MCF 10A (cell line): ENCODE measurements at regions of chr1 and their contacts with region 1.

Region 1: DNA sequence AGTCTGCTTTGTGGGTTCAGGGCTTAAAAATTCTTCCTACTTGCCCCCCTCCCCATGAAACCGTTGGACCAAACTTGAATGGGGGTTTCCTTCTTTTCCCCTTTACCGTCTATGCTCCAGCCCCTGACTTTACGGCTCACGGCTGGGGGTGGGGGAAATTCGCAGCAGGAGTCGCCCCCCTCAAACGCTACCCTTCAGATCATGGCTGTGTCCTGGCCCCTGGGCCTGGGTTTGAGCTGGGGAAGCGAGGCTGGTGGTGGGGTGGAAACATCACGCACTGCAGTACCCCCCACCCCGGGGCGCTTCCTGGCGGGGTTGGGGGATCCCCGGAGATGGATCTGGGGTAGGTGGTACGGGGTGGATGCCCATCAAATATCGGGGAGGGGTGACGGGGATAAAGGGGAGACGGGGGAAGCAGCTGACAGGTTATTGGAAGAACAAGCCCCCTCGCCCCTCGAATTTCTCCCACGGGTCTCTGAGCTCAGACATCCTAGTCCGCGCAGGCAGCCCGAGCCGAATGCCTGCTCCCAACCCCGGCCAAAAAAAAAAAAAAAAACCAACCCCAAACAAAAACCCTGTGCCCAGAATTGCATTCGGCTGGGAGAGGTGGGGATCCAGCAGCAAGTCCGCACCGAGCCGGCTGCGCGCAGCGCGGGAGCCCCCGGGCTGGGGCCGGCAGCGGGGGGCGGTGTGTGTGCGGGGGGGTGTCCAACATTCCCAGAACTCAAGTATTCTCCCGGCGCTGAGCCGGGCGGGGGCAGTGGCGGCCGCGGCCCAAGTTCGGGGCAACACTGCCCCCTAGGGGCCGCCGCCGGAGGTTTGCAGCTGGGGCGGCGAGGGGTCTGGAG is 59.0 kb upstream of the ACOT11 start:
- DNase-seq: peak; percentile 74
- H3K4me3 Mint-ChIP-seq: peak overlapping the region; percentile 77
- H3K27ac Mint-ChIP-seq: peak overlapping the region; percentile 93
- H3K4me1 Mint-ChIP-seq: peaks cover 5% of the 10 kb centered on the region
- H3K27me3 Mint-ChIP-seq: no peaks in the 10 kb centered on the region
- CTCF ChIP-seq: peak; percentile 86

Region 2: GRCh38 chr1:53929246-53929960 is 559.6 kb before region 1 on chr1:
- CTCF ChIA-PET with region 1: no interaction called
- POLR2A ChIA-PET with region 1: no interaction called
- intact Hi-C with region 1: no loop called
- DNase-seq: no peak
- H3K4me3 Mint-ChIP-seq: no peak overlapping the region
- H3K27ac Mint-ChIP-seq: no peak overlapping the region
- H3K4me1 Mint-ChIP-seq: no peaks in the 10 kb centered on the region
- H3K27me3 Mint-ChIP-seq: no peaks in the 10 kb centered on the region
- CTCF ChIP-seq: no peak

Region 3: GRCh38 chr1:54107131-54107530 is 381.9 kb before region 1 on chr1:
- CTCF ChIA-PET with region 1: interaction called, 5 read pairs
- POLR2A ChIA-PET with region 1: no interaction called
- intact Hi-C with region 1: loop called (anchors 1 kb)
- DNase-seq: peak; percentile 32
- H3K4me3 Mint-ChIP-seq: no peak overlapping the region
- H3K27ac Mint-ChIP-seq: no peak overlapping the region
- H3K4me1 Mint-ChIP-seq: no peaks in the 10 kb centered on the region
- H3K27me3 Mint-ChIP-seq: no peaks in the 10 kb centered on the region
- CTCF ChIP-seq: no peak

Region 4: DNA sequence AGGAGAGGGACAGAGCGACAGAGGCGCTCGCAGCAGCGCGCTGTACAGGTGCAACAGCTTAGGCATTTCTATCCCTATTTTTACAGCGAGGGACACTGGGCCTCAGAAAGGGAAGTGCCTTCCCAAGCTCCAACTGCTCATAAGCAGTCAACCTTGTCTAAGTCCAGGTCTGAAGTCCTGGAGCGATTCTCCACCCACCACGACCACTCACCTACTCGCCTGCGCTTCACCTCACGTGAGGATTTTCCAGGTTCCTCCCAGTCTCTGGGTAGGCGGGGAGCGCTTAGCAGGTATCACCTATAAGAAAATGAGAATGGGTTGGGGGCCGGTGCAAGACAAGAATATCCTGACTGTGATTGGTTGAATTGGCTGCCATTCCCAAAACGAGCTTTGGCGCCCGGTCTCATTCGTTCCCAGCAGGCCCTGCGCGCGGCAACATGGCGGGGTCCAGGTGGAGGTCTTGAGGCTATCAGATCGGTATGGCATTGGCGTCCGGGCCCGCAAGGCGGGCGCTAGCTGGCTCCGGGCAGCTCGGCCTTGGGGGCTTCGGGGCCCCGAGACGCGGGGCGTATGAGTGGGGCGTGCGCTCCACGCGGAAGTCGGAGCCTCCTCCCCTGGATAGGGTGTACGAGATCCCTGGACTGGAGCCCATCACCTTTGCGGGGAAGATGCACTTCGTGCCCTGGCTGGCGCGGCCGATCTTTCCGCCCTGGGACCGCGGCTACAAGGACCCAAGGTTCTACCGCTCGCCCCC is 289.1 kb before region 1 on chr1 and contains the starts of genes CYB5RL and MRPL37:
- CTCF ChIA-PET with region 1: interaction called, 8 read pairs
- POLR2A ChIA-PET with region 1: interaction called, 10 read pairs
- intact Hi-C with region 1: loop called (anchors 10 kb)
- DNase-seq: peak; percentile 98
- H3K4me3 Mint-ChIP-seq: peak within 1 kb of the TSS; percentile 93
- H3K27ac Mint-ChIP-seq: peak within 1 kb of the TSS; percentile 95
- H3K4me1 Mint-ChIP-seq: peaks cover 22% of the 10 kb centered on the region
- H3K27me3 Mint-ChIP-seq: no peaks in the 10 kb centered on the region
- CTCF ChIP-seq: no peak
- total RNA-seq, gene CYB5RL: 4.6 and 5.4 TPM in 2 replicates
- total RNA-seq, gene MRPL37: 98.2 and 128 TPM in 2 replicates

Region 5: GRCh38 chr1:54406339-54407153 is 82.5 kb before region 1 on chr1 and contains the start of gene SSBP3:
- CTCF ChIA-PET with region 1: interaction called, 12 read pairs
- POLR2A ChIA-PET with region 1: interaction called, 123 read pairs
- intact Hi-C with region 1: loop called (anchors 1 kb)
- DNase-seq: peak; percentile 91
- H3K4me3 Mint-ChIP-seq: peak within 1 kb of the TSS; percentile 83
- H3K27ac Mint-ChIP-seq: peak within 1 kb of the TSS; percentile 96
- H3K4me1 Mint-ChIP-seq: peaks cover 28% of the 10 kb centered on the region
- H3K27me3 Mint-ChIP-seq: no peaks in the 10 kb centered on the region
- CTCF ChIP-seq: no peak
- total RNA-seq, gene SSBP3: 6.5 and 8.6 TPM in 2 replicates

Region 6: DNA sequence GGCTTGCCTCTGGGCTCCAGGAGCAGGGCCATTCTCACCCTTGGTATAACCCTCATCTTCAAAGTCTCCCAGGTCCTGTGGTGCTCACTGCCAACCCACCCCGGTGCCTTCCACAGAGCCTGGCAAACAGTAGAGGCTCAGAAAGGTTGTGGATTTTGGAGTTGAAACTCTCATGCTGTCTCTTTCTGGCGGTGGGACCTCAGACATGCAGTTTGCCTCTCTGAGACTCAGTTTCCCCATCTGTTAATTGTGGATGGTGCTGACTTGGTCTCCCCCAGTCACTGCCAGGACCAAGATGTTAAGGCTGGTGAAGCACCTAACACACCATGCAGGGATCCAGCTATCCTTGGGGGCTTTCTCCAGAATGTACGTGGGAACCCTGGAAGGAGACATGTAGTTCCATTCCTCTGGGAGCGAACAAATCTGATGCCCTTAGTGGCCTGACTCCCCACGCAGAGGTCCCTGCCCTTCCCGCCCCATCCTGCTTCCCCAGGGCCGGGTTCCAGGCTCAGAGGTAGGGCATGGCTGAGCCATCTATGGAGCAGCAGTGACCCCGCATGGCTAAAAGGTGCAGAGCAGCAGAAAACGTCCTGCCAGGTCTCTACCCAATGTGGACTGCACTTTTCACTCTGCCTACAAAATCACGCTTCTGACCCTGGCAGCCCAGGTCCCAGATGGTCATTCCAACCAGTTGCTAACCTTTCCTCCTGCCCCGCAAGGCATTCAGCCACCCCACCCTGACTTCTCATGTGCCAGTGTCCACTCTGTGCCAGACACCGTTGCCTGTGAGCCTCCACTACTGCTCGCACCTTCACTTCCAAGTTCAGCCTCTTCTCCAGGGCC is 321.3 kb after region 1 on chr1:
- CTCF ChIA-PET with region 1: interaction called, 3 read pairs
- POLR2A ChIA-PET with region 1: no interaction called
- intact Hi-C with region 1: loop called (anchors 5 kb)
- DNase-seq: peak; percentile 69
- H3K4me3 Mint-ChIP-seq: no peak overlapping the region
- H3K27ac Mint-ChIP-seq: no peak overlapping the region
- H3K4me1 Mint-ChIP-seq: peaks cover 9% of the 10 kb centered on the region
- H3K27me3 Mint-ChIP-seq: no peaks in the 10 kb centered on the region
- CTCF ChIP-seq: peak; percentile 89